ENCODE measurements at regions of chr9 and their contacts with region 1.

Region 1: GRCh38 chr9:36487482-36488388 is 85.0 kb upstream of the MELK start:
- DNase-seq: peak; percentile 93
- ATAC-seq: peak; percentile 90
- H3K4me3 ChIP-seq: peak overlapping the region; percentile 46 to 96 (median 61)
- H3K4me3 Mint-ChIP-seq: peak overlapping the region; percentile 96
- H3K27ac ChIP-seq: peak overlapping the region; percentile 94 to 97
- H3K27ac Mint-ChIP-seq: peak overlapping the region; percentile 99
- H3K4me1 ChIP-seq: peaks cover 26 to 30% of the 10 kb centered on the region in 2 donors
- H3K4me1 Mint-ChIP-seq: peaks cover 51% of the 10 kb centered on the region
- H3K27me3 ChIP-seq: no peaks in the 10 kb centered on the region
- H3K27me3 Mint-ChIP-seq: no peaks in the 10 kb centered on the region
- CTCF ChIP-seq: no peak

Region 2: GRCh38 chr9:36400332-36401163 is 87.2 kb before region 1 on chr9:
- CTCF ChIA-PET with region 1: no interaction called
- POLR2A ChIA-PET with region 1: interaction called, 7 read pairs
- intact Hi-C with region 1: loop called (anchors 1 kb)
- DNase-seq: peak; percentile 97
- ATAC-seq: peak; percentile 79
- H3K4me3 ChIP-seq: peak overlapping the region; percentile 72 to 90 (median 81)
- H3K4me3 Mint-ChIP-seq: peak overlapping the region; percentile 88
- H3K27ac ChIP-seq: peak overlapping the region; percentile 94 to 98
- H3K27ac Mint-ChIP-seq: peak overlapping the region; percentile 93
- H3K4me1 ChIP-seq: peaks cover 18 to 21% of the 10 kb centered on the region in 2 donors
- H3K4me1 Mint-ChIP-seq: peaks cover 34% of the 10 kb centered on the region
- H3K27me3 ChIP-seq: no peaks in the 10 kb centered on the region
- H3K27me3 Mint-ChIP-seq: no peaks in the 10 kb centered on the region
- CTCF ChIP-seq: no peak

Region 3: DNA sequence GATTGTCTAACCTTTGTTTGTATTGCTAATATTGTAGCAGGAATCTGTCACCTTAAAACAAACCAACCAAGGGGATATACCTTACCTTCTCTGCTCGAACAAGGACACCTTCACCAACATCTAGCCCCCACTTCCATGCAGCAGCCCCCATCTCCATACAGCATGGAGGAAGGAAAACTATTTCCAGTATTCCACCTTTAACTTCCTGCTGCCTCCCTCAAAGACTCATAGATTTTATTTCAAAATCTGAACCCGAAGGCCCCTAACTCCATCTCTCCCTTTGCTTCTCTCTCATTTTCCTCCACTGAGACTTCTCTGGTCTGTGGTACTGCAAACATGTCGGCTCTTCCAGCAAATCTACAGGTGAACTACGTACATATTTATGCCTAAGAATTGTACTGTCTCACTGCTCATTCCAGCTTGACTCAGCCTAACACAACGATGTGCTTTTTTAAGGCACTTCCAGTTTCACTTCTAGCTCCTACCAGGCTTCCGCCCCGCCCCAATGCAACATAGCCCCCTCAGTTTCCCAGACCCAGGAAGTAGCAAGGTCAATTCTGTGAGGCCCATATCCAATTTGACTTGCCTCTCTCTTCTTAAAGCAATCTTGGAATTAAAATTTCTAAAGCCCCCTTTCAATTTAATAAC is 17.0 kb before region 1 on chr9:
- CTCF ChIA-PET with region 1: interaction called, 6 read pairs
- POLR2A ChIA-PET with region 1: interaction called, 9 read pairs
- intact Hi-C with region 1: loop called (anchors 1 kb)
- DNase-seq: peak; percentile 79
- ATAC-seq: peak; percentile 96
- H3K4me3 ChIP-seq: peak overlapping the region; percentile 30 to 63 (median 48)
- H3K4me3 Mint-ChIP-seq: peak overlapping the region; percentile 83
- H3K27ac ChIP-seq: peak overlapping the region; percentile 85 to 95
- H3K27ac Mint-ChIP-seq: peak overlapping the region; percentile 87
- H3K4me1 ChIP-seq: peaks cover 19 to 24% of the 10 kb centered on the region in 2 donors
- H3K4me1 Mint-ChIP-seq: peaks cover 35% of the 10 kb centered on the region
- H3K27me3 ChIP-seq: no peaks in the 10 kb centered on the region
- H3K27me3 Mint-ChIP-seq: no peaks in the 10 kb centered on the region
- CTCF ChIP-seq: no peak

Region 4: GRCh38 chr9:36572515-36573418 is 85.0 kb after region 1 on chr9 and contains the start of gene MELK:
- CTCF ChIA-PET with region 1: no interaction called
- POLR2A ChIA-PET with region 1: no interaction called
- intact Hi-C with region 1: loop called (anchors 5 kb)
- DNase-seq: peak; percentile 86
- ATAC-seq: peak; percentile 90
- H3K4me3 ChIP-seq: peak within 1 kb of the TSS; percentile 67 to 97 (median 81)
- H3K4me3 Mint-ChIP-seq: peak within 1 kb of the TSS; percentile 90
- H3K27ac ChIP-seq: peak within 1 kb of the TSS; percentile 18 to 67
- H3K27ac Mint-ChIP-seq: peak within 1 kb of the TSS; percentile 71
- H3K4me1 ChIP-seq: peaks cover 8 to 16% of the 10 kb centered on the region in 2 donors
- H3K4me1 Mint-ChIP-seq: peaks cover 13% of the 10 kb centered on the region
- H3K27me3 ChIP-seq: peaks cover 0 to 2% (median 0%) of the 10 kb centered on the region in 4 experiments
- H3K27me3 Mint-ChIP-seq: peaks cover 4% of the 10 kb centered on the region
- CTCF ChIP-seq: no peak
- total RNA-seq, gene MELK: 0.17 TPM in 1 of 2 replicates, not detected in the other

Measured in B cell (primary cell).